ENCODE measurements at regions of chr5 and their contacts with region 1.

Region 1: DNA sequence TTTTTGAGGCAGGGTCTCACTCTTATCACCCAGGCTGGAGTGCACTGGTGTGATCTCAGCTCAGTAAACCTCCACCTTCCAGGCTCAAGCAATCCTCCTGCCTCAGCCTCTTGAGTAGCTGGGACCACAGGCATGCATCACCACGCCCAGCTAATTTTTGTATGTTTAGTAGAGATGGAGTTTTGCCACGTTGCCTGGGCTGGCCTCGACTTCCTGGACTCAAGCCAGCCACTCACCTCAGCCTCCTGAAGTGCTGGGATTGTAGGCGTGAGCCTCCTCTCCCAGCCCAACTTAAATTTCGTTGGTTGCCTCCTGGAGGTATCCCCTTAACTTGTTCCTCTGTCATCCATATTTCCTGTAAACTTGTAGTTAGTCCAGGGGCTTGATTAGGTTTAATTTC is 47.2 kb downstream of the RAB24 start:
- DNase-seq: peak; percentile 43
- H3K4me3 ChIP-seq: no peak overlapping the region
- H3K27ac ChIP-seq: no peak overlapping the region
- H3K4me1 ChIP-seq: peaks cover 4% of the 10 kb centered on the region
- H3K27me3 ChIP-seq: no peaks in the 10 kb centered on the region
- CTCF ChIP-seq: no peak

Region 2: DNA sequence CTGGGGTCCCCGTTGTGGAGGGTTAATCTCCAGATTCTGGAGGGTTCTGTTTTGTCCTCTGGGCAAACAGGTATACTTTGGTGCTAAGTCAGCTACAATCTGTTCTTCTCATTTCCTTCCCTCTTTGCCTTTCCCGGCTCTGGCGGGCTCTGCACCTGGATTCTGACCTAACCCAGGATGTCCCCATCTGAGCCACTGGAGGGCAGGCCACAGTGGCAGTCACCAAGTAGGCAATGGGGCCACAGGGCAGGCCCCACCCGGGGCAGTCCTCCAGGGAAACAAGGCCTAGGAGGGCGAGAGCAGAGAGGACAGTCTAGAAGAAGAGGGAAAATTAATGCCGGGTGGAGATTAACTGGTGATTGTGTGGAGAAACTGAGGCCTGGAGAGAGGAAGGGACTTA is 1638.8 kb before region 1 on chr5:
- CTCF ChIA-PET with region 1: no interaction called
- dilution Hi-C with region 1: no loop called
- in situ Hi-C with region 1: no loop called
- intact Hi-C with region 1: no loop called
- DNase-seq: no peak
- H3K4me3 ChIP-seq: no peak overlapping the region
- H3K27ac ChIP-seq: no peak overlapping the region
- H3K4me1 ChIP-seq: no peaks in the 10 kb centered on the region
- H3K27me3 ChIP-seq: no peaks in the 10 kb centered on the region
- CTCF ChIP-seq: no peak

Region 3: GRCh38 chr5:177212242-177212641 is 44.1 kb before region 1 on chr5:
- CTCF ChIA-PET with region 1: no interaction called
- dilution Hi-C with region 1: no loop called
- in situ Hi-C with region 1: no loop called
- intact Hi-C with region 1: no loop called
- DNase-seq: no peak
- H3K4me3 ChIP-seq: no peak overlapping the region
- H3K27ac ChIP-seq: no peak overlapping the region
- H3K4me1 ChIP-seq: no peaks in the 10 kb centered on the region
- H3K27me3 ChIP-seq: no peaks in the 10 kb centered on the region
- CTCF ChIP-seq: no peak

Region 4: DNA sequence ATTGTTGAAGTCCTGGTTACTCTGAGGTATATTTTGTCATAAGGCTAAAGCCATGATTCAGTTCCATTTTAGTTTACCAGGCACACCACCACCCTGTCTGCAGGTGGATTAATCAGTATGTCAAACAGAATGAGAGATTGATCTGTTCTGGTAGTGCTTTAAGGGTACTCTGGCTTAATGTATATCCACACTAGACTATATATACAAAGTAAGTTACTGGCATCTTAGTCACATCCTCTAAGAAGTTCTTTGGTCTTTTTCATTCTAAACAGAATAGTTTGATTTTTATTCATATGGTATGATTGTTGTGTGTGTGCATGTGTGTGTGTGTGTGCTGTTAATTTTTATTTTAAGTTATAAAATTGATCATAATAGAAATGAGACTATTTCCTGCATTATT is 14.5 kb before region 1 on chr5:
- CTCF ChIA-PET with region 1: no interaction called
- dilution Hi-C with region 1: no loop called
- in situ Hi-C with region 1: no loop called
- intact Hi-C with region 1: loop called (anchors 2 kb)
- DNase-seq: no peak
- H3K4me3 ChIP-seq: no peak overlapping the region
- H3K27ac ChIP-seq: no peak overlapping the region
- H3K4me1 ChIP-seq: peaks cover 4% of the 10 kb centered on the region
- H3K27me3 ChIP-seq: no peaks in the 10 kb centered on the region
- CTCF ChIP-seq: no peak